ENCODE measurements at regions of chr6 and their contacts with region 1.

Region 1: DNA sequence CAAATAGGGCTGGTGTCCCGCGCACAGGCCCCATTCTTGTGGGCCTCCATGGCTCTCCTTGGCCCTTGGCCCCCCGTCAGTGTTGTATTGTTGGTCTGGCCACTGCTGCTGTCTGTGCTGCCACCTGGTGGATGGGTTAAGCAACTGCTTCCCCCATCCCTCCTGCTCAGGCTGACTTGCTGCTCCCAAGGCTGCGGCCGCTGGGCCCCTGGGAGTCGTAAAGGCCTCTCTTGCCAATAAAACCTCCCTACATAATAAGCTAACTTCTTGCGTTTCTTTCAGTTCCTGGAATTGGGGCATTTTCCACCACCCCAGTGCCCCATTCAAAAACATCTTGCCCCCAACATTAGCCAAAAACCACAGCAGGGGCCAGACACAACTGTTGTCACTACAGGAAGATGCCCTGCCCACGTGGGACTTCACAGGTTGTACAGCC is 27.1 kb downstream of the CD83 start:
- DNase-seq: peak; percentile 65 to 80 (median 78)
- H3K4me3 ChIP-seq: no peak overlapping the region
- H3K4me3 Mint-ChIP-seq: no peak overlapping the region
- H3K27ac ChIP-seq: no peak overlapping the region
- H3K27ac Mint-ChIP-seq: peak overlapping the region in 2 of 7 donors; percentile 21 to 41
- H3K4me1 ChIP-seq: peaks cover 7 to 14% of the 10 kb centered on the region in 2 donors
- H3K4me1 Mint-ChIP-seq: peaks cover 20% of the 10 kb centered on the region
- H3K27me3 ChIP-seq: no peaks in the 10 kb centered on the region
- H3K27me3 Mint-ChIP-seq: peaks cover 0 to 4% (median 2%) of the 10 kb centered on the region in 3 donors
- CTCF ChIP-seq: peak; percentile 95

Region 2: GRCh38 chr6:13908955-13909381 is 235.7 kb before region 1 on chr6:
- intact Hi-C with region 1: loop called (anchors 2 kb)
- DNase-seq: peak; percentile 31 to 62 (median 53)
- H3K4me3 ChIP-seq: no peak overlapping the region
- H3K4me3 Mint-ChIP-seq: no peak overlapping the region
- H3K27ac ChIP-seq: no peak overlapping the region
- H3K27ac Mint-ChIP-seq: no peak overlapping the region
- H3K4me1 ChIP-seq: no peaks in the 10 kb centered on the region
- H3K4me1 Mint-ChIP-seq: peaks cover 2% of the 10 kb centered on the region
- H3K27me3 ChIP-seq: peaks cover 0 to 3% of the 10 kb centered on the region in 2 donors
- H3K27me3 Mint-ChIP-seq: peaks cover 4 to 15% (median 9%) of the 10 kb centered on the region in 3 donors
- CTCF ChIP-seq: peak; percentile 80

Region 3: DNA sequence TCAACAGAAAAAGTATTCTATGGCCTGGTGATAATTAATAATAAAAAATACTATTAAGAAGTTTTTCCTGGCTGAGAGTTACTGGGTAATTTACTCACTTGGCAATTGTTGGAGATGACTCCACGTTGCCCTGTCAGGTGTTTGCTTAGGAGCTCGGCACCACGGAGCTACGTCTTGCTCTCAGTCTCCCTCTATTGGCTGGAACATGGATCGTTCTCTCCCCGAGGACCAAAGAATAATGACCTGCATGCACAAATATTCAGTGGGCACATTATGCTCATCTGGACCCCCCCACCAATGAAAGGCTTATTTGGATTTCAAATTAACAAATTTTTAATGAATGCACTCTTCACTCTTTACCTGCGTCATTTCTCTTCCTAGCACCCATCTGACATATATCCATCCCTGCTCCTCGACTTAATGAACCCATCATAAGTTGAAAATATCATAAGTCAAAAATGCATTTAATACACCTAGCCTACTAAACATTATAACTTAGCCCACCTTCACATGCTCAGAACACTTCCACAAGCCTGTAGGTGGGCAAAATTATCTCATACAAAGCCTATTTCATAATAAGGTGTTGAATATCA is 98.1 kb before region 1 on chr6:
- intact Hi-C with region 1: loop called in 1 of 2 experiments (anchors 10 kb)
- DNase-seq: peak; percentile 25 to 52 (median 28)
- H3K4me3 ChIP-seq: no peak overlapping the region
- H3K4me3 Mint-ChIP-seq: no peak overlapping the region
- H3K27ac ChIP-seq: no peak overlapping the region
- H3K27ac Mint-ChIP-seq: peak overlapping the region in 1 of 7 donors; percentile 8
- H3K4me1 ChIP-seq: no peaks in the 10 kb centered on the region
- H3K4me1 Mint-ChIP-seq: no peaks in the 10 kb centered on the region
- H3K27me3 ChIP-seq: no peaks in the 10 kb centered on the region
- H3K27me3 Mint-ChIP-seq: peaks cover 2 to 22% (median 4%) of the 10 kb centered on the region in 3 donors
- CTCF ChIP-seq: peak; percentile 78

Measured in CD14-positive monocyte (primary cell).